ENCODE measurements at regions of chr16 and their contacts with region 1.

Region 1: GRCh38 chr16:29805378-29806098 is 791 bp upstream of the MAZ start:
- DNase-seq: peak; percentile 97
- H3K4me3 Mint-ChIP-seq: peak overlapping the region; percentile 100
- H3K27ac Mint-ChIP-seq: peak overlapping the region; percentile 100
- H3K4me1 Mint-ChIP-seq: peaks cover 42% of the 10 kb centered on the region
- H3K27me3 Mint-ChIP-seq: no peaks in the 10 kb centered on the region

Region 2: DNA sequence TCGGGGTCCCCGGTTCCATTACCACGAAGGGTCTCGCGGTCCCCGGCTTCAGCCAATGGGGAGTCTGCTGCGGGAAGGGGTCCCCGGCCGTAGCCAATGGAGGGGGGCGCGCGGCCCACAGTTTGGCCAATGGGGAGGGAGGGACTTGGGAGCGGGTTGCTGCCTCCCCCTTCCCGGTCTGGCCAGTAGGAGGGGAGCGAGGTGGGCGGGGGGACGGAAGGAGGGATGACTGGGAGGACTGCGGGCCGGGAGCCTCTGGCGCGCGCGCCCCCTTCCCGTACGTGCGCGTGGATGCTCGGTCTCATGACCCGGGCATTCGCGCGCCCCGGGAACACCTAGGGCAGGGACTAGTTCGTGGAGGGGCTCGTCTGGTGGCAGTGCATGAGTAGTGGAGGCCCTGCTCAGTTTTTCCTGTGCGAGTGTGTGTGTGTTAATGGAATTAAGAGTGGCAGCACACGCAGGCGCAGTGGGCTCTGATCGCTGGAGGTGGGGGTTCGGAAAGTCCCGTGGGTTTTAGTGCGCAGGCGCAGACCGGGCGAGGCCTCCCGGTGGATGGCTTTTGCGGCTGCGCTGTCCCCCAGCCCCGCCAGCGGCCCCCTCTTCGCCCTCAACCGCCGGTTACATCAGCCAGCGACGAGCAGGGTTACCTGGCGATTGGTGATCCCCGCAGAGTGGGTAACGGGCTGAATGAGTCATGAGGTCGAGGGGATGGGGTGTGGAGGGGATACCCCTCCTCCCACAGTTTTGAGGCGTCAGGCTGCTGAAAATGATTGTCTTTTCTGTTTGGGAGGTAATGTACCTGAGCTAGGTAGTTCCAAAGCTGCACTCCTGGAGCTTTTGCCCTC is 981.4 kb before region 1 on chr16:
- intact Hi-C with region 1: loop called (anchors 5 kb)
- DNase-seq: peak; percentile 93
- H3K4me3 Mint-ChIP-seq: peak overlapping the region; percentile 98
- H3K27ac Mint-ChIP-seq: peak overlapping the region; percentile 100
- H3K4me1 Mint-ChIP-seq: peaks cover 52% of the 10 kb centered on the region
- H3K27me3 Mint-ChIP-seq: peaks cover 4% of the 10 kb centered on the region

Region 3: GRCh38 chr16:29745853-29746345 is 59.6 kb before region 1 on chr16 and contains the start of gene C16orf54:
- intact Hi-C with region 1: loop called (anchors 5 kb)
- DNase-seq: peak; percentile 89
- H3K4me3 Mint-ChIP-seq: peak within 1 kb of the TSS; percentile 97
- H3K27ac Mint-ChIP-seq: peak within 1 kb of the TSS; percentile 97
- H3K4me1 Mint-ChIP-seq: peaks cover 49% of the 10 kb centered on the region
- H3K27me3 Mint-ChIP-seq: no peaks in the 10 kb centered on the region
- total RNA-seq, gene C16orf54: 21.3 and 24.6 TPM in 2 replicates

Region 4: DNA sequence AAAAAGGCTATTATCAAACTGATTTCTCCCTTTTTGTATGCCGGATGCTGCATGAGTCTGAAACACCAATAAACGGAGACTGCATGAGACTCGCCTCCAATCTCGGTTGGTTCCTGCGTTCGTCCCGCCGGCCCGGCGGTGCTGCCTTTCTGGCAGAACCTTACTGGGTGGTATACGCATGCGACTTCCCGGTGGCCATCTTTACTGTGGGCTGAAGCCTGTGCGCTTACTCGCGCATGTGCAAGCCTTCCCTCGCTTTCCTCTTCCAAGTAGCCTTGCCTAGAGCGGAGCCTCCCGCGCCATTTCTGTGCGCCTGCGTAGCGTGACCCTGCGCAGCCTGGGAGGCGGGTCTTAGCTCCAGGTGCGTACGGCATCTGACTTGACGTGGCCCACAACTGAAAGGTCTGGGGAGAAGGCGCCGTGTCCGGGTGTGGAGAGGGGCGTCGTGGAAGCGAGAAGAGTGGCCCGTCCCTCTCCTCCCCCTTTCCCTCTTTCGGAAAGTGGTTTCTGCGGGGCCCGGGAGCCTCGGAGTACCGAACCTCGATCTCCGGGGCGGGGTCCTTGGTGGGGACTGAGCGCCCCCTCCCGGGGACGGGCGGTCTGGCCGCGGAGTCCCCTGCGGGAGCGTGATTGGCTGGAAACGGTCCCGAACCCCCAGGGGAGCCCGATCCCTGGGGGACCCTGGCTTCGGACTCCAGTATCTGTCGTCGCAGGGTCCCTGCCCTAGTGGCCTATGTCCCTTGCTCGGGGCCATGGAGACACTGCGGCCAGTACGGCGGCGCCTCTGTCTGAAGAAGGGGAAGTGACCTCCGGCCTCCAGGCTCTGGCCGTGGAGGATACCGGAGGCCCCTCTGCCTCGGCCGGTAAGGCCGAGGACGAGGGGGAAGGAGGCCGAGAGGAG is 10.5 kb after region 1 on chr16 and contains the start of gene PAGR1:
- intact Hi-C with region 1: loop called (anchors 1 kb)
- DNase-seq: peak; percentile 99
- H3K4me3 Mint-ChIP-seq: peak within 1 kb of the TSS; percentile 94
- H3K27ac Mint-ChIP-seq: peak within 1 kb of the TSS; percentile 98
- H3K4me1 Mint-ChIP-seq: peaks cover 48% of the 10 kb centered on the region
- H3K27me3 Mint-ChIP-seq: no peaks in the 10 kb centered on the region
- total RNA-seq, gene PAGR1: 29.2 and 30.8 TPM in 2 replicates

Region 5: DNA sequence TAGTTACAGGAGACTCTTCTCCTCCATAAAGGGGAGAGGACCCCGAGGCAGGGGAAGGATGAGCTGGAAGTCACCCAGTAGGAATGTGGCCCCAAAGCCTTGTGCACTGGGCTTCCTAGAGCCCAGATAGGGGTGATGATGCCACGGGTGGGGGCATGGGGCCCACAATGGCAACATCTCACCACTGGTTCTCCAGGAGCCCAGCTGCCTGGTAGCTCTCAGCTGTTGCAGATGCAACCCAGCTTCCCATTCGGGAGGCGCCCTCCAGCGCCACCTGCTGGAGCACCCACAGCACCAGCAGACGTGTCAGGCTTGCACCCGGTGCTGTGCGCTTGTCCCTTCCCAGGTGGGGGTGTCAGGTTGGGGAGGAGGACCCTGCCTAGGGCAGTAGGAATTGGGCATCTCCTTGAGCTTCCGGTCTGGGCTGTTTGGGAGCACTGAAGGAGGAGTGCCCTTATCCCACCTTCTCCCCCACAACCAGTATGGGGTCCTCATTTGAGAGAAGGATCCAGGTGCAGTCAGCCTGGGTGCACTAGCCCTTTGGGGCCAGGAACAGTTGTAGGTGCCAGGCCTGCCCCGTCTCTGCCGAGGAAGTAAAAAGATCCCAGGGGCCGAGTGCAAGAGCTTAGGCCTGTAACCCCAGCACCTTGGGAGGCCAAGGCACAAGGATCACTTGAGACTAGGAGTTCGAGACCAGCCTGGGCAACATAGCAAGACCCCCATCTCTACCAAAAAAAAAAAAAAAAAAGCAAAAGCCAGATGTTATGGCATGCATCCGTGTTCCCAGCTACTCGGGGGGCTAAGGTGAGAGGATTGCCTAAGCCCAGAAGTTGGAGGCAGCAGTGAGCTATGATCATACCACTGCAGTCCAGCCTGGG is 43.1 kb after region 1 on chr16:
- intact Hi-C with region 1: loop called (anchors 1 kb)
- DNase-seq: peak; percentile 67
- H3K4me3 Mint-ChIP-seq: no peak overlapping the region
- H3K27ac Mint-ChIP-seq: no peak overlapping the region
- H3K4me1 Mint-ChIP-seq: peaks cover 5% of the 10 kb centered on the region
- H3K27me3 Mint-ChIP-seq: no peaks in the 10 kb centered on the region

Region 6: GRCh38 chr16:30024451-30024850 is 218.9 kb after region 1 on chr16:
- intact Hi-C with region 1: loop called (anchors 5 kb)
- DNase-seq: no peak
- H3K4me3 Mint-ChIP-seq: no peak overlapping the region
- H3K27ac Mint-ChIP-seq: no peak overlapping the region
- H3K4me1 Mint-ChIP-seq: peaks cover 13% of the 10 kb centered on the region
- H3K27me3 Mint-ChIP-seq: peaks cover 31% of the 10 kb centered on the region

Measured in activated T-helper 1 cell treated with anti-CD3 and anti-CD28 coated beads, Interleukin-12 subunit alpha, Interleukin-12 subunit beta, Interleukin-2, Interleukin-4 antibody, amounts not matched to agents 30 ng/mL and 10 ng/mL and 1 ng/mL, durations not matched to agents 14 hours and 24 hours and 36 hours (primary cell).